ENCODE measurements at regions of chr18 and their contacts with region 1.

Region 1: DNA sequence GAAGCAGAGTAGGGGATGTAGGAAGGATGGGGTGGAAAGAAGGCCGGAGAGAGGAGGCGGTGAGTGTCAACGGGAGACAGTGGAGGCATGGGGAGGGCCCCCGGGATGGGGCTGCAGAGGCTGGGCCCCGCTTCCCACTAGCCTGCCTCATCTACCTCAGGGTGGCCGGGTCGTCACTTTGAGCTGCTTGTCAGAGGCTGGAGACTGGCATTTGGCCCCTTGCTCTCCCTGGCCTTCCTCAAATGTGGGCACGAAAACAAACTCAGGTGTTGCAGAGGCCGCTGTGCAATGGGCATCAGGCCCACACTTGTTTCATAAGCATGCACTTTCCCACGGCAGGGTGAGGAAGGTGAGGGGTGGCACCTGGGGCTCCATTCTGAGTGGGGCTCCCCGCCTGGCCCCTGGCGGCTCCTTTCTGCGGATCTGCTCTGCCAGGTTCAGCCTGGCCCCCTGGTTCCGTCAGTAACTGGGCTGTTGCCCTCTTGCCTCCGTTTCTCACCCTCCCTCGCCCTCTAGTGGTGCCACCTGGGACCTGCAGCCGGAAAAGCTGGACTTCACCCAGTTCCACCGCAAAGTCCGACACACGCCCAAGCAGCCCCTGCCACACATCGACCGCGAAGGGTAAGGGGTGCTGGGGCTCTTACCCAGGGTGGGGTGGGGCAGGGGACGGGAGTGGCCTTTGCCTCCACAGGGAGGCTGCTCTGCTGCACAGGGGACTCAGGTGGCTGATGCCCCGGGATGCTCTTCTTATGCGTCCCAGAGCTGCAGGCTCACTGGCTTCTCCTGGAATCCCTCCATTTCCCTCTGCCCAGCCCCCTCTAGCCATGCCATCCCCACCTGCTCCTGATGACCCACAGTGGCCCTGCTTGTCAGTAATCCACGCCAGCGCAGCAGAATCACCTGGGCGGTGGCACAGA is 125.4 kb downstream of the CTIF start:
- DNase-seq: peak; percentile 59
- H3K4me3 ChIP-seq: no peak overlapping the region
- H3K27ac ChIP-seq: no peak overlapping the region
- H3K4me1 ChIP-seq: peaks cover 4% of the 10 kb centered on the region
- H3K27me3 ChIP-seq: no peaks in the 10 kb centered on the region
- CTCF ChIP-seq: peak; percentile 78 to 89 (median 86)
- POLR2A ChIP-seq: no peak

Region 2: GRCh38 chr18:48475635-48476549 is 188.3 kb before region 1 on chr18:
- intact Hi-C with region 1: loop called (anchors 1 kb)
- DNase-seq: peak; percentile 42
- H3K4me3 ChIP-seq: no peak overlapping the region
- H3K27ac ChIP-seq: no peak overlapping the region
- H3K4me1 ChIP-seq: no peaks in the 10 kb centered on the region
- H3K27me3 ChIP-seq: no peaks in the 10 kb centered on the region
- CTCF ChIP-seq: peak; percentile 66 to 82 (median 78)
- POLR2A ChIP-seq: no peak

Region 3: GRCh38 chr18:48540251-48541025 is 123.8 kb before region 1 on chr18:
- intact Hi-C with region 1: loop called (anchors 5 kb)
- DNase-seq: peak; percentile 58
- H3K4me3 ChIP-seq: peak overlapping the region; percentile 60 to 66
- H3K27ac ChIP-seq: peak overlapping the region; percentile 88 to 89
- H3K4me1 ChIP-seq: peaks cover 2% of the 10 kb centered on the region
- H3K27me3 ChIP-seq: no peaks in the 10 kb centered on the region
- CTCF ChIP-seq: no peak
- POLR2A ChIP-seq: peak; percentile 13

Region 4: DNA sequence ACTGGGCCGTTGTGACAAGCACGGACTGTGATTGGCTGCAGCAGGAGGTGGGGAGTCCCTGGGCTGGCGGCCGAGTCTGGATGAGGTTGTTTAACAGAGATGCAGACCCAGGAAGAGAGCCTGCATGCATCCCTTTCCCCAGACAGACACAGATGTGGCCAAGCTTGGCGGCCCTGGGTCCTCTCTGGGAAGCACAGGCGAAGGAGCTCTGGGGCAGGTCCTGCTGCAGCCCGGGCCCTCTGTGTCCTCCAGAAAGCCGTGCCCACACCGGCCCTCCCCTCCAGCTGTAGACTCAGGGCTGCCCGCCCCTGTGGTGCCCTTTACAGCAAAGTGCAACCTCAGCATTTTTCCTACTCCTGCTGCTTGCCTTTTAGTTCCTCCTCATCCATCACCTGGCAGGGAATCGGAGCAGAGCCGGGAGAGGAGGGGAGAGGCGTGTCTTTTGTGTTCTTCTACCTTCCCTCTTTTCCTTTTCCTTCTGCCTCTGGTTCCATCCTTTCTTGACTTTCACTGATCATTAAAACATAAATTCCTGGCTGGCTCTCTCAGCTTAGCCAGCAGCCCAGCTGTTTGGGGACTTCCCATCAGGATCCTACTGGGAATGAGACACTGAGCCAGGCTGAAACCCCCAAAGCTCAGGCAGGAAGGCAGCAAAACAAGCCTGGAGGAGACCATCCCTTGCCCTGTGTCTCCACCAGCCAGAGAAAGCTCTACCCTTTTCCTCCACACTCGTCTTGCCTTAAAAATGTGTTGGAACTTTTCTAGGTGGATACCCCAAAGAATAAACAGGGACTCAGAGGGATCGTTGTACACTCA is 50.4 kb before region 1 on chr18:
- intact Hi-C with region 1: loop called (anchors 10 kb)
- DNase-seq: no peak
- H3K4me3 ChIP-seq: no peak overlapping the region
- H3K27ac ChIP-seq: no peak overlapping the region
- H3K4me1 ChIP-seq: no peaks in the 10 kb centered on the region
- H3K27me3 ChIP-seq: no peaks in the 10 kb centered on the region
- CTCF ChIP-seq: no peak
- POLR2A ChIP-seq: no peak

Region 5: GRCh38 chr18:49006641-49007454 is 342.7 kb after region 1 on chr18:
- intact Hi-C with region 1: no loop called
- DNase-seq: peak; percentile 42
- H3K4me3 ChIP-seq: no peak overlapping the region
- H3K27ac ChIP-seq: no peak overlapping the region
- H3K4me1 ChIP-seq: no peaks in the 10 kb centered on the region
- H3K27me3 ChIP-seq: no peaks in the 10 kb centered on the region
- CTCF ChIP-seq: no peak
- POLR2A ChIP-seq: no peak

Region 6: DNA sequence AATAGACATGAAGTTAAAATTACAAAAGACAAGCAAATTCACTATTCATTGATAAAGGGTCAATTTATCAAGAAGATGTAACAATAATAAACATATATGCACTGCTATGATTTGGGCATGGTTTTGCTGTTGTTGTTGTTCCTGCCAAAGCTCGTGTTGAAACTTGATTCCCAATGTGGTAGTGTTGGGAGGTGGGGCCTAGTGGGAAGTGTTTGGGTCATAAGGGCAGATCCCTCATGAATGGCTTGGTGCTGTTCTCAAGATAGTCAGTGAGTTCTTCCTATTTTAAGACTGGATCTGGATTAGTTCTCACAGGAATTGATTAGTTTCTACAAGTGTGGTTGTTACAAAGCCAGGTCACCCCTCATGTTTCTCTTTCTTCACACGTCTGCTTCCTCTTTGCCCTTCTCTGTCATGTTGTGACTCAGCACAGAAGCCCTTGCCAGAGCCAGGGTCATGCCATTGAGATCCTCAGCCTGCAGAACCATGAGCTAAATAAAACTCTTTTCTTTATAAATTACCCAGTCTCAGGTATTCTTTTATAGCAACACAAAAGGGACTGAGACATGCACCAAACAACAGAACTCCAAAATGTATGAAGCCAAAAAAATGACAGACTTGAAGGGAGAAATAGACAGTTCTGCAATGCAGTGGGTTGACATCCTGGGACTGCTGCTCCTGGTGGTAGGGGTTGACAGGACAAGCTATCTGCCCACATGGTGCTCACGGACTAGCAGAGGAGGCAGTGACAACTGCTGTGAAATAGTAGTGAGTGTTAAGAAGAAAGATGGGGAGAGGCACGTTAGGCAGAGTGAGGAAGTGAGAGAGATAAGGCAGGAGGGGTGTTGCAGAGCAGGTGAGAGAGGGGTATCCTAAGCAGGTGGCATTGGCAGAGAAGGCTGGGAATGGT is 1692.1 kb after region 1 on chr18:
- intact Hi-C with region 1: loop called (anchors 10 kb)
- DNase-seq: no peak
- H3K4me3 ChIP-seq: no peak overlapping the region
- H3K27ac ChIP-seq: no peak overlapping the region
- H3K4me1 ChIP-seq: no peaks in the 10 kb centered on the region
- H3K27me3 ChIP-seq: no peaks in the 10 kb centered on the region
- CTCF ChIP-seq: no peak
- POLR2A ChIP-seq: no peak

Measured in prostate gland (tissue), 2 donors.